Activated naive CD4-positive, alpha-beta T cell treated with anti-CD3 and anti-CD28 coated beads, Interleukin-2, amount 10 ng/mL, durations not matched to agents 7 days and 5 days (primary cell): ENCODE measurements at regions of chr11 and their contacts with region 1.

Region 1: DNA sequence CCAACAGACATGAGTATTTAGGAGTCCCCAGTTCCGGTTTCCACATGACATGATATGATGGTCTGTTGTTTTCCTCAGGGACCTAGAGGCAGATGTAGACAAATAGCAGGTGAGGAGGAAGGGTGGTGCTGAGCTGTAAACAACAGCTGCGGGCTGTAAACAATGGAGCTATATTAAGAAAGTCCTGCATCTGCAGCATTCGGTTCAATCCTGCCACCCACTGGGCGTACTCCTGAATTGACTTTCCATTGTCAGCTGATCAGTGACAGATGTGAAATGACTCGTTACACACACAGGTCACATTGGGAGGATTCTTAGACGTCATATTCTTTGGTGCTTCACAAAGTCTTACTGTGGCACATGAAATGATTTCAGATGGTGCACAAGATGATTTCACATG is 26.8 kb upstream of the RAG1 start:
- DNase-seq: peak; percentile 50
- H3K4me3 Mint-ChIP-seq: no peak overlapping the region
- H3K27ac Mint-ChIP-seq: no peak overlapping the region
- H3K4me1 Mint-ChIP-seq: no peaks in the 10 kb centered on the region
- H3K27me3 Mint-ChIP-seq: peaks cover 4% of the 10 kb centered on the region

Region 2: GRCh38 chr11:36431429-36432092 is 109.4 kb before region 1 on chr11:
- CTCF ChIA-PET with region 1: no interaction called
- DNase-seq: no peak
- H3K4me3 Mint-ChIP-seq: no peak overlapping the region
- H3K27ac Mint-ChIP-seq: no peak overlapping the region
- H3K4me1 Mint-ChIP-seq: peaks cover 6% of the 10 kb centered on the region
- H3K27me3 Mint-ChIP-seq: peaks cover 15% of the 10 kb centered on the region

Region 3: DNA sequence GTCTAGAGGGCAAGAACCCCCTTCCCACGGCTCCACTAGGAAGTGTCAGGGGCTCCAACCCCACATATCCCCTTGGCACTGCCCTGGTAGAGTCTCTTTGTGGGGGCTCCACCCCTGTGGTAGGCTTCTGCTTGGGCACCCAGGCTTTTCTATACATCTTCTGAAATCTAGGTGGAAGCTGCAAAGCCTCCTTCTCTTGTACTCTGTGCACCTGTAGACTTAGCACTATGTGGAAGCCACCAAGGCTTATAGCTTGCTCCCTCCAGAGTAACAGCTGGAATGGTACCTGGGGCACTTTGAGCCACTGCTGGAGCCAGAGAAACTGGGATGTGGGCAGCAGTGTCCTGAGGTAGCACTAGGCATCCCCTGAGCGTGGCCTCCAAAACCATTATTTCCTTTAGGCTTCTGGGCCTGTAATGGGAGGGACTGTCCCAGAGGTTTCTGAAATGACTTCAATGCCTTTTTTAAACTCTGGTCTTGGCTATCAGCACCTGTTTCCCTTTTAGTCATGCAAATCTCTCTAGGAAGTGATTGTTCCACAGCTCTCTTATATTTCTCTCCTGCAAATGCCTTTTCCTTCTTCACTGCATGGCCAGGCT is 99.3 kb before region 1 on chr11:
- CTCF ChIA-PET with region 1: no interaction called
- DNase-seq: no peak
- H3K4me3 Mint-ChIP-seq: no peak overlapping the region
- H3K27ac Mint-ChIP-seq: no peak overlapping the region
- H3K4me1 Mint-ChIP-seq: no peaks in the 10 kb centered on the region
- H3K27me3 Mint-ChIP-seq: no peaks in the 10 kb centered on the region

Region 4: DNA sequence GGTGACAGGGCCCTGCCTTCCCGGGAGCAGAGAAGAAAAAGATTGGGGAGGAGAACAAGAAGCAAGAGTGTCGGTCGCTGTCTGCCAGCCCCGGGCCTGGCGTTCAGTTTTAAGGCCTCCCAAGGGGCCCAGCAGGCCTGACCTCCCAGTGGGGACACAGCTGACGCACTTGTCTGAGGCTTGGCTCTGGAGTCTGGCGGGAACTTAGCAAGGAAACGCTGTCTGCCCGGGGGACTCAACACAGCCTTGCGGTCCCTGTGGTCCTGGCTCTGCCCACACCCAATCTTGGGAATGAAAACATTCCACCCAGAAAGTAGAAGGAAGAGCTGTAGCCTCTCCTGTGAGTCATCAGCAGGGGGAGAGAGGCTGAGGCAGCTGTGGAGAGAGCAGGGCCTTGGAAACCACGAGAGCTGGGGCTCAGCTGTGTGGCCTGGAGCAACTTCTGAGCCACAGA is 85.3 kb before region 1 on chr11:
- CTCF ChIA-PET with region 1: no interaction called
- DNase-seq: no peak
- H3K4me3 Mint-ChIP-seq: no peak overlapping the region
- H3K27ac Mint-ChIP-seq: no peak overlapping the region
- H3K4me1 Mint-ChIP-seq: peaks cover 38% of the 10 kb centered on the region
- H3K27me3 Mint-ChIP-seq: peaks cover 8% of the 10 kb centered on the region

Region 5: DNA sequence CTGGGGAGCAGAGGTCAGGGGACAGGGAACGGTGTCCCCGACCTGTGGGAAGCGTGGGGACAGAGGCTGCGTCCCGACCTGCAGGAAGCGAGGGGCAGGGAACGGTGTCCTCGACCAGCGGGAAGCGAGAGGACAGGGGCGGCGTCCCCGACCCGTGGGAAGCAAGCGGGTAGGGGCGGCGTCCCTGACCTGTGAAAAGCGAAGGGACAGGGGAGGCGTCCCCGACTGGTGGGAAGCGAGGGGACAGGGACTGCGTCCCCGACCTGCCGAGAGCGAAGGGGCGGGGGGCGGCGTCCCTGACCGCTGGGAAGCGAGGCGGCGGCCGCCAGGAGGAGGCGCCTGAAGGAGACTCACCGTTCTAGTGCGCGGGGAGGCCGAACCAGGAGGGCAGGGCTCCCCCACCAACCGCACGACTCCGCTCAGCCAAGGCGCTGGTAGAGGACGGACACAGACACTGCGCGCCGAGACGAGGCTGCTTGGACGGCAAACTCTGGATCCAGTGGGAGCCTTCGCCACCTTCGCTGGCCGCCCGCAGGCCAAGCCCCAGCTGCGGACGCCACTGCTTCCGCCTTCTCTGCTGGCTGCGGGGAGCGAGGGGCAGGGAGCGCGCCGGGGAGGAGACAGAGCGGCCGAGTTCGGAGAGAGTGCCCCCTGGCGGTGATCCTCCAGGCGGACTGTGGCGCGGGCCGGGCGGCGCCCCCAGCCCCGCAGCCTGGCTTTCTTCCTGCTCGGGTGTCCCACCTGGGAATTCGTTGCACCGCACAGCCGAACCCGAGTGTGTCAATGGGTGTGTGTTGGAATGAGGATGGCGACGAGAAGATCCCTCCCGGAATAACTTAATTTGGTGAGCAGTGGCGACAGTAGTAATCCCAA is 31.1 kb before region 1 on chr11 and contains the start of gene TRAF6:
- CTCF ChIA-PET with region 1: interaction called, 15 read pairs
- DNase-seq: peak; percentile 90
- H3K4me3 Mint-ChIP-seq: peak within 1 kb of the TSS; percentile 99
- H3K27ac Mint-ChIP-seq: peak within 1 kb of the TSS; percentile 92
- H3K4me1 Mint-ChIP-seq: peaks cover 30% of the 10 kb centered on the region
- H3K27me3 Mint-ChIP-seq: peaks cover 10% of the 10 kb centered on the region

Region 6: GRCh38 chr11:36702330-36703055 is 161.5 kb after region 1 on chr11:
- CTCF ChIA-PET with region 1: no interaction called
- DNase-seq: no peak
- H3K4me3 Mint-ChIP-seq: no peak overlapping the region
- H3K27ac Mint-ChIP-seq: no peak overlapping the region
- H3K4me1 Mint-ChIP-seq: no peaks in the 10 kb centered on the region
- H3K27me3 Mint-ChIP-seq: no peaks in the 10 kb centered on the region